A549 (cell line): ENCODE measurements at regions of chr6 and their contacts with region 1.

Region 1: DNA sequence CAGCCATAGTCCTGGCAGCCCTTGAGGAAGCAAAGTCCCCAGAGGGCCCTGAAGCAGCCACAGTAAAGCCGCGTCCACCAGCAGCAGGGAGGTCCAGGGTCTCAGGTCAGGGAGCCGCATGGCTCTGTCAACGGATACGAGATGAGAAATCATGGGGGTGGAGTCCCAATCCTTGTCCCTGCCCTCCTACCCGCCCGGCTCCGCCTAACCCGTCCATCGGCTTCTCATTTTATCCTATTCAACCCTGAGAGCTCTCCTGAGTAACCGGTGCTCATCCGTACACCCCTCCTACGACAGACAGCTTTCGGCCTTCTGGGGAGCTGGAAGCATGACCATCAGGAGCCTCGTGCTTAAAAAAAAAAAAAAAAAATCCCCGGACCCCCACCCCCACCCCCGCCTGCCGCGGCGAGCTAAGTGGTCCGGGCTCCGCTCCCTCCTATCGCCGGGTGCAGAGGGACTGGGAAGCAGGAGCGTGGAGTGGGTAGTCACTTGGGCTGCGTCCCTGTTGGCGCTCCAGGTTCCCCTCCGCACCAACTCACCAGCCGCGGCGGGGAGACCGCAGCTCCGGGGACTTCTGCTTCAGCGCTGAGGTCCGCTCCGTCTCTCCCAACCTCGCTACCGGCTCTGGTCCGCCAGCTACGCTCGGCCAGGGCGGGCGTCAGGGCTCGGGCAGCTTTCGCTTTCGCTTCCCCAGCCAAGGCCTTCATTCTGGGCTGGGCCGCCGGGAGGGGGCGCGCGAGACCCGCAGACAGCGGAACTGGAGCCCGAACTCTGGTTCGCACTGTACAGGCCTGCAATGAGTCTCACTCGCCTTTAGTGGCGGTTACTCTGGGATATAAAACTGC is at the start of gene TAP2:
- DNase-seq: peak; percentile 88 to 90
- ATAC-seq: peak; percentile 94 to 98
- H3K4me3 ChIP-seq: peak within 1 kb of the TSS; percentile 74
- H3K27ac ChIP-seq: peak within 1 kb of the TSS; percentile 83 to 90
- H3K4me1 ChIP-seq: peaks cover 8% of the 10 kb centered on the region; the same call in 1 of the 3 replicates
- CTCF ChIP-seq: peak; percentile 81
- EP300 ChIP-seq: no peak
- POLR2A ChIP-seq: peak; percentile 29
- RAD21 ChIP-seq: peak; percentile 90 to 91
- polyA plus RNA-seq, gene TAP2: 11.4 and 12.1 TPM in 2 replicates

Region 2: DNA sequence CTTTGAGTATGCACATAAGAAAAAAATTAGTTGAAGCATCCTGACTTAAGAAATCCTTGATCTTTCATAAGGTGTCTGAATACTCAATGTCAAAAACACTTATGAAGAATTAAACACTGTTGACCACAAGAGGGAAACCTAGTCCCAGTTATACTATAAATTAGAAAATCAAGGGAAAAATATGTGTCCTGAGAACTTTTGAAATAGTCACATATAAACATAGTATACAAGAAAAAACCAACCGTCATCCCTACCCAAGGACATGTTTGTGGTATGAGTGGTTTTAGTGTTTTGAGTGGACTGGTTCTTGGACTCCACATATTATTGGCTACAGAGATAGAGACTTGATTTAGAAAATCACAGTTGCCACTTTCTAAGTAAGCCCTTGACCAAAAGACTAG is 406.3 kb before region 1 on chr6:
- CTCF ChIA-PET with region 1: no interaction called
- POLR2A ChIA-PET with region 1: no interaction called
- DNase-seq: peak; percentile 7 to 21
- ATAC-seq: no peak
- H3K4me3 ChIP-seq: no peak overlapping the region
- H3K27ac ChIP-seq: no peak overlapping the region
- H3K4me1 ChIP-seq: no peaks in the 10 kb centered on the region
- CTCF ChIP-seq: peak; percentile 49
- EP300 ChIP-seq: no peak
- POLR2A ChIP-seq: no peak
- RAD21 ChIP-seq: peak; percentile 51 to 61; a peak in 4 of 5 replicates

Region 3: DNA sequence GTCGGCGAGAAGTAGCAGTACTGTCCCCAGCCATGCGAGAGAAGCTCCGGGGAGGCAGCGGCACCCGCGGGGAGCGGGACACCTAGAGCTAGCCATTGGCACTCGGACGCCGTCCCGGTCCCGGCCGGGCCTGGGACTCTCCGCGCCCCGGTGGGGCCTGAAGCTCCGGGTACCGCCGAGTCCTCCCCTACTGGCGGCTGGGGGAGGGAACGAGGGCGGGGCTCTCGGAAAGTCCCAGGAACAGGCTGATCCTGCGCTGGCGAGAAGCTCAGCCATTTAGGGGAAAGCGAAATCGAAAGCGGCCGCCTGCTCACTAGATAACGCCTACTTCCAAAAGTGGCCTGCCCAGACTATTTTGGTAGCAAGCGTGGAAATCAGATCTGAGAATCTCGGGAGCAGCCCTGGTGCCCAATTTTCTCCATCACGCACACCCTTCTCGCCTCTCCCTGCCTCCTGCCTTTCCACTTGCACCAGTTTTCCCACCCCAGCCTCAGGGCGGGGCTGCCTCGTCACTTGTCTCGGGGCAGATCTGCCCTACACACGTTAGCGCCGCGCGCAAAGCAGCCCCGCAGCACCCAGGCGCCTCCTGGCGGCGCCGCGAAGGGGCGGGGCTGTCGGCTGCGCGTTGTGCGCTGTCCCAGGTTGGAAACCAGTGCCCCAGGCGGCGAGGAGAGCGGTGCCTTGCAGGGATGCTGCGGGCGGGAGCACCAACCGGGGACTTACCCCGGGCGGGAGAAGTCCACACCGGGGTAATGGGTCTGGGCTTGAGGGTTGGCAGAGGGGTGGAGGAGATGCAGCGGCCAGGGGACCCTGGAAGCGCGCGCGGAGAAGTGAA is 15.4 kb after region 1 on chr6 and contains the starts of genes PSMB9 and TAP1:
- CTCF ChIA-PET with region 1: interaction called, 225 read pairs
- POLR2A ChIA-PET with region 1: interaction called, 30 read pairs
- DNase-seq: peak; percentile 85 to 90
- ATAC-seq: peak; percentile 92 to 94
- H3K4me3 ChIP-seq: peak within 1 kb of the TSS; percentile 61
- H3K27ac ChIP-seq: peak within 1 kb of the TSS; percentile 95 to 96
- H3K4me1 ChIP-seq: peaks cover 9% of the 10 kb centered on the region; the same call in 2 of the 3 replicates
- CTCF ChIP-seq: peak; percentile 62
- EP300 ChIP-seq: no peak
- POLR2A ChIP-seq: peak; percentile 47
- RAD21 ChIP-seq: peak; percentile 33 to 51; a peak in 4 of 5 replicates
- polyA plus RNA-seq, gene PSMB9: 11.7 and 12.5 TPM in 2 replicates
- polyA plus RNA-seq, gene TAP1: 21.2 and 28.2 TPM in 2 replicates

Region 4: GRCh38 chr6:32879691-32880090 is 41.4 kb after region 1 on chr6:
- CTCF ChIA-PET with region 1: interaction called, 253 read pairs
- POLR2A ChIA-PET with region 1: no interaction called
- DNase-seq: no peak
- ATAC-seq: no peak
- H3K4me3 ChIP-seq: no peak overlapping the region
- H3K27ac ChIP-seq: no peak overlapping the region
- H3K4me1 ChIP-seq: no peaks in the 10 kb centered on the region
- CTCF ChIP-seq: no peak
- EP300 ChIP-seq: no peak
- POLR2A ChIP-seq: no peak
- RAD21 ChIP-seq: no peak

Region 5: DNA sequence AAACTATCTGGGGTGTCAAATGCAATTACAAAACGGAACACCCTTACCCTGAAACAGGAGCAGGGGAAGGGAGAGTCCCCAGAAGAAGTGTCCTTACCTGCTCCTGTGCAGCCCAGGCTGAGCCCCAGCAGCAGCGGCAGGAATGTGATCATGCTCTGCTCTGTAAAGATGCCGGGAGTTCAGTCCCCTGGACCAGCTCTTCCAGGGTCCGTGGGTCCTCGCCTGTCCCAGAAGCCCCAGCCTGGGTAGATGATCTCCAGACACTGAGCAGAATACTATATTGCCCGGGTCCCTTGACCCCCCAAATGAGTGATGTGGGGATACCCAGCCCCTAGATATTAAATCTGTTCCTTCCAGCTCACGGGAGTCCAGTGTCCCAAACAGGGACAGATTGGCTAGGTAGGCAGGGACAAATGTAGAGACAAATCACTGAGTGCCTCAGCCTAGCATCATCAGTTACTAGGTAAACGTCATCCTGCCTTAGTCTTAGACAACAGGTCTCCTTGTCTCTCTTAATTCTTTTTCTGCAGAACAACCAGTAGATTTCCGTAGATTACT is 102.4 kb after region 1 on chr6 and contains the start of gene HLA-DMB:
- CTCF ChIA-PET with region 1: interaction called, 20 read pairs
- POLR2A ChIA-PET with region 1: no interaction called
- DNase-seq: peak; percentile 79 to 87
- ATAC-seq: peak; percentile 100
- H3K4me3 ChIP-seq: peak within 1 kb of the TSS; percentile 44
- H3K27ac ChIP-seq: peak within 1 kb of the TSS; percentile 35 to 73; a peak in 3 of 6 replicates
- H3K4me1 ChIP-seq: no peaks in the 10 kb centered on the region
- CTCF ChIP-seq: no peak
- EP300 ChIP-seq: no peak
- POLR2A ChIP-seq: no peak
- RAD21 ChIP-seq: no peak
- polyA plus RNA-seq, gene HLA-DMB: 14.3 and 21.6 TPM in 2 replicates

Region 6: DNA sequence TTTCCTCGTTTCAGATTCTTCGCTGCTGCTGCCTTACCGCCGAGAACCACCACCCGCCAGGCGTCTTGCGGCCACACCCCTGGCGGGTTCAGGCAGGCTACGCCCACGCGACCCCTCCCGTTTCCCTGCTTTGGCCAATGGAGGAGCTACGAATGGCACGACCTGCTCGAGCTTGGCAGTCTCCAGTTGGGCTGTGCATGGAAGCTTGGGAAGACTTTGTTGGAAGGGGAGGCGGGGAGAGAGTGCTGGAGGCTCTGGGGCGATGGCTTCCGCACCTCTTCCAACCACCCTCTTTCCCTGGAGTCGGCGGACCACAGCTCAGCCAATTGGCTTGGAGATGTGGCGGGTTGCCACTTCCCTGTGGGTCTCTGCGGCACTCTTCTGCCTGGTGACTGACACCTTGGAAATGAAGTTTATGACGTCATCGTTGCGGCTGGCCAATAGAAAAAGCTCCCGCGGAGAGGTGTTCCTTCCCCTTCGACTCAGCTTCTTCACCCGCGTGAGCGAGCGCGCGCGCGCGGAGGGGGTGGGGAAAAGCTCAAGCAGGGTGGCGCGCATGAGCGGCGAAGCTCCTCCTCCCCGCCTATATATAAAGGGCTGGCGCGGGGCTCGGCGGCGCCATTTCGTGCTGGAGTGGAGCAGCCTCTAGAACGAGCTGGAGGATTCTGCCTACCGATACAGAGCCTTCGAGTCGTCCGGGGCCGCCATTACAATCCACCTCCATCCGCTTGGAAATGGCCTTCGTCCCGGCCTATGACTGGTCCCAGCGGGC is 133.4 kb after region 1 on chr6:
- CTCF ChIA-PET with region 1: interaction called, 5 read pairs
- POLR2A ChIA-PET with region 1: interaction called, 18 read pairs
- DNase-seq: peak; percentile 79 to 99
- ATAC-seq: peak; percentile 49 to 70
- H3K4me3 ChIP-seq: peak overlapping the region; percentile 72
- H3K27ac ChIP-seq: peak overlapping the region; percentile 99 to 100
- H3K4me1 ChIP-seq: peaks cover 22% of the 10 kb centered on the region
- CTCF ChIP-seq: no peak
- EP300 ChIP-seq: no peak
- POLR2A ChIP-seq: peak; percentile 99
- RAD21 ChIP-seq: no peak